ENCODE measurements at regions of chr1 and their contacts with region 1.

Region 1: GRCh38 chr1:33080885-33081553 is at the start of gene AZIN2:
- DNase-seq: peak; percentile 94
- H3K4me3 ChIP-seq: peak within 1 kb of the TSS; percentile 64
- H3K27ac ChIP-seq: no peak within 1 kb of the TSS
- H3K4me1 ChIP-seq: peaks cover 11% of the 10 kb centered on the region
- CTCF ChIP-seq: no peak
- total RNA-seq, gene AZIN2: 0.63 and 1.3 TPM in 2 replicates

Region 2: GRCh38 chr1:33094971-33095604 is 14.1 kb after region 1 on chr1:
- CTCF ChIA-PET with region 1: no interaction called
- POLR2A ChIA-PET with region 1: no interaction called
- intact Hi-C with region 1: no loop called
- DNase-seq: peak; percentile 37
- H3K4me3 ChIP-seq: no peak overlapping the region
- H3K27ac ChIP-seq: no peak overlapping the region
- H3K4me1 ChIP-seq: peaks cover 6% of the 10 kb centered on the region
- CTCF ChIP-seq: peak; percentile 100

Region 3: DNA sequence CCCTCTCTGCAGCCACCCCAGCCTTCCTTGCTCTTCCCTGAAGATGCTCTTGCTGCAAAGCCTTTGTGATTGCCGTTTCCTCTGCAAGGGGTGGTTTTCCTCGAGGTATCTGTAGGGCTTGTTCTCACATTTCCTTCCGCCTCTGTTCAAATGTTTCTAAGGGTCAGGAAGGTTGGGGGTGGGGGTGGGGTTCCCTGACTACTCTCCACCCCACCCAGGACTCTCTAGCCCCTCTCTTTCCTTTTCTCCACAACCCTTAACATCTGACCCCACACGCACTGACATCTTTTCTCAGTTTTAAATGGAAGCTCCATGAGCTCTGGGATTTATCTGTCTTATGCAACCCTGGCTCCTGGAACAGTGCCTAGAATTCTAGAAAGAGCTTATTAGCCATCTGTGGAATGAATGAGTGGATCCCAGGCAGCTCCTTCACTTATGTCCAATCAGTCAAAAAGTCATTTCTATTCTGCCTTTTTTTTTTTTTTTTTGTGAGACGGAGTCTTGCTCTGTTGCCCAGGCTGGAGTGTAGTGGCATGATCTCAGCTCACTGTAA is 148.0 kb after region 1 on chr1:
- CTCF ChIA-PET with region 1: interaction called, 10 read pairs
- POLR2A ChIA-PET with region 1: no interaction called
- intact Hi-C with region 1: no loop called
- DNase-seq: no peak
- H3K4me3 ChIP-seq: no peak overlapping the region
- H3K27ac ChIP-seq: no peak overlapping the region
- H3K4me1 ChIP-seq: no peaks in the 10 kb centered on the region
- CTCF ChIP-seq: no peak

Region 4: DNA sequence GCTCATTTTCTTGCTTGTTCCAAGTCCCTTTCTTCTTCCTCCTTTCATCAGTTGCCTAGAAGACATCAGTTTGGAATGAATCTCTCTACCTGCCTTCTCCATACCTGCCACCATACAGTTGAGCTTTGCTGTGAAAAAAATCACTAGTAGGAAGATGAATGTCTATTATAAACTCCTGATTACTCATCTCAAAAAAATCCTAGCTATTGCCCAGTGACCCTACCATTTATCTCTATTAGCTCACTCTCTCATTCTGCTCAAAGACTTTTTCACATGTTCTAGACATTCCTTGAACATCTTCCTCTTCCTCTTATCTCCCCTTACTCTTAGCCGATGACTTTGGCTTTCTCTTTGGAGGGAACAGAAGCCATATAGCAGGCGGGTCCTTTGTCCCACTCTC is 733.1 kb after region 1 on chr1:
- CTCF ChIA-PET with region 1: no interaction called
- POLR2A ChIA-PET with region 1: no interaction called
- intact Hi-C with region 1: no loop called
- DNase-seq: no peak
- H3K4me3 ChIP-seq: no peak overlapping the region
- H3K27ac ChIP-seq: no peak overlapping the region
- H3K4me1 ChIP-seq: no peaks in the 10 kb centered on the region
- CTCF ChIP-seq: no peak